ENCODE measurements at regions of chr1 and their contacts with region 1.

Region 1: DNA sequence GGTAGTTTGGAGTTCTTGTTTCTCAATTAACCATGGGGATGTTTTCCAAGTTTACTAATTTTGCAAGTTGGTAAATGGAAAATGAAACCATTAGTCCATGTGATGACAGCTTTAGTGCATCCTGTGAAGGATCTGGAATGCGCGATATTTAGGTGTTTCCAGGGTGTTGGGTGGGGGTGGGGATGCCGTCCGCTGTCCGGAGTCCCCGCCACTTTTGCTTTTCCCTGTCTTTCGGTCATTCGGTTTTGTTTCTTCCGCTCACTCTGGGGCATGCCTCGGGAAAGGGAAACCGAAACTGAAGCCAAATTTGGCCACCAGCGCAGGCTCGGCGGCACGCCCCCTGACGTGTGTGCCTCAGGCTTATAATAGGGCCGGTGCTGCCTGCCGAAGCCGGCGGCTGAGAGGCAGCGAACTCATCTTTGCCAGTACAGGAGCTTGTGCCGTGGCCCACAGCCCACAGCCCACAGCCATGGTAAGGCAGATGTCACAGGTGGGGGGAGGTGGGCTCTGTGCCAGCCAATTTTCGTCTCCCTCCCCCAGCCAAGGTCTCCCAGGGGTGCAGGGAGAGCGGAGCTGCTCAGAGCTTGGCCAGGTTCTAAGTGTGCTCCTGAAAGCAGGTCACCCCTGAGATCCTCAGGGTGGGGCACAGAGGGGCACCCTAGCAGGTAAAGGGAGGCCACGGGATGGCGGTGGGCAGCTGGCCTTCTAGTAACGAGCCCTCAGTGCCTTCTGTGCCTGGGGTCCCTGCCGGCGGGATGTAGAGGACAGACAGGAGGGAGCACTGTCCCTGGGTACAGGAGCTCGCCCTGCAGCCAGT is at the start of gene ISG15:
- DNase-seq: peak; percentile 92
- ATAC-seq: peak; percentile 93
- H3K4me3 Mint-ChIP-seq: peak within 1 kb of the TSS; percentile 74
- H3K27ac Mint-ChIP-seq: peak within 1 kb of the TSS; percentile 80
- H3K4me1 Mint-ChIP-seq: peaks cover 27% of the 10 kb centered on the region
- H3K27me3 Mint-ChIP-seq: peaks cover 2% of the 10 kb centered on the region
- total RNA-seq, gene ISG15: 30.5 to 51.7 TPM

Region 2: DNA sequence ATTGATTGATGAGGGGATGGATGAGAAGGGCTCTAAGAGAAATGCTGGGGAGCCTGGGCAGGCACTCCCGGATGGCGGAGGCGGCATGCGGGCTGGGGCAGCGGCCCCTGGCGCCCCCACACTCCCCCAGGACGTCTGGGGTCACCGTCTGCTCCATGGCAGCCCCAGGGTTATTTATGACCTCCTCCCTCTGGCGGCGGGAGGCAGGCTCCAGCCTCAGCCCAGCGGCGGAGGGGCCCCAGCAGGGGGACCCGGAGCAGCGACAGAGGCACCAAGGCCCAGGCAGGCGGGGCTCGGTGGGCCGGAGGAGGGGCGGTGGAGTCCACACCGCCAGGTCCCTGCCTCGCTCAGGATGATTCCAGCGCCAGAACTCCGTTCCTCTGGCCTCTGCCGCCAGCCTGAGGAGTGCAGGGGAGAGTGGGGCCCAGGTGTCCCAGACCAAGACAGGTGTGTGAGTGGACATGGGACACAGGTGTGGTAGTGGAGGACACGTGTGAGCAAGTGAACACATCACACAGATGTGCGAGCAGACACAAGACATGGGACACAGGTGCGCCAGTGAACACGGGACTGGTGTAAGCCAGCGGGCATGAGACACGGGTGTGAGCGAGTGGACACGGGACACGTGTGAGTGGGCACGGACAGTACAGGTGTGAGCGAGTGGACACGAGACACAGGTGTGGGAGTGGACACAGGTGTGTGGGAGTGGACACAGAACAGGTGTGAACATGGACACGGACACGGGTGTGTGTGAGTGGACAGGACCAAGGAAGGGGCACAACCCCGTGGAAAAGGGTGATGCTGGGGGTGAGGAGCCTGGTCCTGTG is 92.1 kb before region 1 on chr1:
- CTCF ChIA-PET with region 1: no interaction called
- POLR2A ChIA-PET with region 1: no interaction called
- intact Hi-C with region 1: no loop called
- DNase-seq: peak; percentile 52
- ATAC-seq: peak; percentile 42
- H3K4me3 Mint-ChIP-seq: no peak overlapping the region
- H3K27ac Mint-ChIP-seq: no peak overlapping the region
- H3K4me1 Mint-ChIP-seq: peaks cover 12% of the 10 kb centered on the region
- H3K27me3 Mint-ChIP-seq: peaks cover 42% of the 10 kb centered on the region

Region 3: DNA sequence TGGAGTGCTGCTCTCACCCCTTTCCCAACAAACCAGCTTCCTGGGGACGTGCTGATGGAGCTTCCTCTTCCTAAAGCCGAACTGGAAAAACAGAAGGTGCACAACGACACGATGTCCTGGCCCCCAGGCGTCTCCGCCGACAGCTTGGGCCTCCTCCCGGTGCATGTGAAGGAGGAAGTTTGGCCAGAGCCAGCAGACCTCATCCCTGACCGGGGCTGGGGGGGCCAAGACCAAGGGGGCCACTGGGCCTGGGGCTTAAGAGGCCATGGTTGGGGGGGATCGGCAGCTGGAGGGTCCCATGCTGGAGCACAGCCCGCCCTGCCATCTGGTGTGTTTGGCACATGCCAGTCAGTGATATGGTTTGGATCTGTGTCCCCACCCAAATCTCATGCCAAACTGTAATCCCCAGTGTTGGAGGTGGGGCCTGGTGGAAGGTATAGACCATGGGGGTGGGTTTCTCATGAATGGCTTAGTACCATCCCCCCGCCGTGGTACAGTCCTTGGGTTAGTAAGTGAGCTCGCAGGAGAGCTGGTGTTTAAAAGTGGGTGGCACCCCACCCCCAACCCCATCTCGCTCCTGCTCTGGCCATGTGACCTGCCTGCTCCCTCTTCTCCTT is 19.8 kb before region 1 on chr1:
- CTCF ChIA-PET with region 1: no interaction called
- POLR2A ChIA-PET with region 1: no interaction called
- intact Hi-C with region 1: loop called in 1 of 2 experiments (anchors 2 kb)
- DNase-seq: no peak
- ATAC-seq: no peak
- H3K4me3 Mint-ChIP-seq: no peak overlapping the region
- H3K27ac Mint-ChIP-seq: no peak overlapping the region
- H3K4me1 Mint-ChIP-seq: peaks cover 26% of the 10 kb centered on the region
- H3K27me3 Mint-ChIP-seq: peaks cover 23% of the 10 kb centered on the region

Region 4: GRCh38 chr1:999725-1000356 is 13.5 kb before region 1 on chr1 and contains the start of gene HES4:
- CTCF ChIA-PET with region 1: interaction called, 20 read pairs
- POLR2A ChIA-PET with region 1: no interaction called
- intact Hi-C with region 1: loop called in 1 of 2 experiments (anchors 1 kb)
- DNase-seq: peak; percentile 85
- ATAC-seq: peak; percentile 67
- H3K4me3 Mint-ChIP-seq: peak within 1 kb of the TSS; percentile 72
- H3K27ac Mint-ChIP-seq: peak within 1 kb of the TSS; percentile 90
- H3K4me1 Mint-ChIP-seq: peaks cover 14% of the 10 kb centered on the region
- H3K27me3 Mint-ChIP-seq: peaks cover 22% of the 10 kb centered on the region
- total RNA-seq, gene HES4: 3.5 to 4.2 TPM

Region 5: DNA sequence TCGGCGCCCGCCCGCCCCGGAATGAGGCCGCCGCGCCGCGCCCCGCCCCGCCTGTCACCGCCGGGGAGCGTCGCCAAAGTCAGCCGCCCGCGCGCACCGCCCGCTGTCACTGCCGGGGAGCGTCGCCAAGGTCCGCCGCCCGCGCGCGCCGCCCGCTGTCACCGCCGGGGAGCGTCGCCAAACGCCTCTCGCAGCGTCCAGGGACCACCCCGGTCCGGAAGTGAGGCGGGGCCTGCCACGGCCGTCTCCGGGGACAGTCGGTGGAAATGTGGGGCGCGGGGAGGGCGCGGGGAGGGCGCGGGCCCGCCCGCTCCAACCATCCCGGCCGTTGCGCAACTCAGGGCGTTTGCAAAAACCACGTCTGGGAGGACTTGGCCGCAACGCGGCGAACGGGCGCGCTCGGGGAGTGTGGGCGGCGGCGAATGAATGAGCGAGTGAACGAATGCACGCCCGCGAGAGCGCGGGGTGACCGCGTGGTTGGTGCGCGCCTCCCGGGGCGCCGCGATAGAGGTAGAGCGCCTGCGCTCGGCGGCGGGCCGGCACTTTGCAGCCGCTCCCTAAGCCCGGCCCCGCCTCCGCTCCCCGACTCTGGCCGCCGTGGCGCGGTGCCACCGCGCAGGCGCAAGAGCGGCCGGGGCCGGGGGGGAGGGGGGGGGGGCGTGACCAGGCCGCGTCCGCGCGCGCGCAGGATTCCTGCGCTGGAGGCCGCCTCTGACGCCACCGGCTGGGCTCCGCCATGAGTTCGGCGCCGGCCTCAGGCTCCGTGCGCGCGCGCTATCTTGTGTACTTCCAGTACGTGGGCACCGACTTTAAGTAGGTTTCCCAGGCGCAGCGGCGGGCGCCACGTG is 294.8 kb after region 1 on chr1 and contains the starts of genes ACAP3 and PUSL1:
- CTCF ChIA-PET with region 1: no interaction called
- POLR2A ChIA-PET with region 1: no interaction called
- intact Hi-C with region 1: no loop called
- DNase-seq: peak; percentile 94
- ATAC-seq: peak; percentile 73
- H3K4me3 Mint-ChIP-seq: peak within 1 kb of the TSS; percentile 80
- H3K27ac Mint-ChIP-seq: peak within 1 kb of the TSS; percentile 84
- H3K4me1 Mint-ChIP-seq: peaks cover 23% of the 10 kb centered on the region
- H3K27me3 Mint-ChIP-seq: no peaks in the 10 kb centered on the region
- total RNA-seq, gene ACAP3: 17.5 to 24.3 TPM
- total RNA-seq, gene PUSL1: 13.7 to 18.0 TPM